ENCODE measurements at regions of chr3 and their contacts with region 1.

Region 1: DNA sequence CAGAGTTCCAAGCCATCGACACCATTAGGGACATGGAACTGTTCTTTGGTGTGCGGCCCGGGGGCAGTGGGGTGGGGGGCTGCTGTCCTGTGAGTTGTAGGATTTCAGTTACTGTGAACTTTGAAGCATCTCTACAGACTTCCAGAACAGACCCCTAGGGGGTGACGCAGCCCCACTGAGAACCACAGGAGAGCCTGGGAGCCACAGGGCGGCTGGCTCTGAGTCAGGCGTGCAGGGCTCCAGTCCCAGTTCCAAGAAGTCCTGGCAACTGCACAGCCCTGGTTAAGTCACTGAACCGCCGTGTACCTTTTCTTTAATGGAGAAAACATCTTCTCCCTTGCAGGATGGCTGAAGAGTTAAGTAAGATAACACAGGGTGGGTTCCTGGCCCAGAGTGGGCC is 23.5 kb upstream of the LRTM1 start:
- DNase-seq: peak; percentile 93
- ATAC-seq: peak; percentile 89
- H3K4me3 ChIP-seq: no peak overlapping the region
- H3K27ac ChIP-seq: peak overlapping the region; percentile 29
- H3K4me1 ChIP-seq: peaks cover 18% of the 10 kb centered on the region
- H3K27me3 ChIP-seq: no peaks in the 10 kb centered on the region
- CTCF ChIP-seq: peak; percentile 92
- POLR2A ChIP-seq: peak; percentile 53; the same call in 1 of the 2 replicates
- RAD21 ChIP-seq: peak; percentile 99

Region 2: DNA sequence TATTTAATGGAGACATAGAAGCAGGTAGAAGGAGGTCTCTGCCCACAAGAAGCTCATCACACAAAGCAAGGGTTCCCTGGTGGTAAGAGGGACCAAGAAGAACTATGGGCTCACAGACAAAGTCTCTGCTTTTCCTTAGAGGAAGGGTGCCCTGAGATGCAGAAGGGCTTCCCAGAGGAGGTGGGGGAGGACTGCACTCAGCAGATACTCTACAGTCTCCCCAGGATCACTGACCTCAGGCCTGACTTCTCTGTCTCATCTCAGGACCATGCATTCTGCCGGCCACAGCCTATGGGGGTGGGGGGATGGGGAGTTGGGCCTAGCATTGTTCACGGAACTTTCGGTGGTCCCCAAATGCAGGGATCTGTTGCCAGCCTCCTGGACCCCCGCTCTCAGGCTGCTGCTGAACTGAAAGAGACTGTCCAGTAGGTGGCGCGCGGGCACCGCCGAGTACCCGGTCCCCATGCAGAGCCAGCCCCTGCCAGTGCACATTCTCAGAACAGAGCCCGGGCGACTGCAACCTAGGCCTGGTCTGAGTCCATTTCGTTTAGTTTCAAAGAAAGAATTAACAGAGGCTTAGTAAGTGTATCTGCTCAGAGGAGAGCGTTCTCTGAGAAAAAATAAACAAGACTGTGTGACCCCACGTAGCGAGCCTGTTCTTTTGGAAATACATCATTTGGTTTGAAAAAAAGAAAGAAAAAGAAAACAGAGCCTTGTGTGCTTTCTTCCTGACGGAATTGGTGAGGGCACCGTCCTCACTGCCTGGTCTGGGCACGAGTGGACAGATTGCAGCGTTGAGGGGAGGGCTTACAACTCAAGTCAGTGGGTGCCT is 97.6 kb before region 1 on chr3:
- CTCF ChIA-PET with region 1: no interaction called
- POLR2A ChIA-PET with region 1: no interaction called
- dilution Hi-C with region 1: no loop called
- in situ Hi-C with region 1: no loop called
- intact Hi-C with region 1: loop called (anchors 5 kb)
- DNase-seq: peak; percentile 74
- ATAC-seq: peak; percentile 98
- H3K4me3 ChIP-seq: no peak overlapping the region
- H3K27ac ChIP-seq: peak overlapping the region; percentile 79
- H3K4me1 ChIP-seq: peaks cover 8% of the 10 kb centered on the region
- H3K27me3 ChIP-seq: peaks cover 5% of the 10 kb centered on the region; the same call in 1 of the 2 replicates
- CTCF ChIP-seq: peak; percentile 83
- POLR2A ChIP-seq: no peak
- RAD21 ChIP-seq: peak; percentile 93

Region 3: DNA sequence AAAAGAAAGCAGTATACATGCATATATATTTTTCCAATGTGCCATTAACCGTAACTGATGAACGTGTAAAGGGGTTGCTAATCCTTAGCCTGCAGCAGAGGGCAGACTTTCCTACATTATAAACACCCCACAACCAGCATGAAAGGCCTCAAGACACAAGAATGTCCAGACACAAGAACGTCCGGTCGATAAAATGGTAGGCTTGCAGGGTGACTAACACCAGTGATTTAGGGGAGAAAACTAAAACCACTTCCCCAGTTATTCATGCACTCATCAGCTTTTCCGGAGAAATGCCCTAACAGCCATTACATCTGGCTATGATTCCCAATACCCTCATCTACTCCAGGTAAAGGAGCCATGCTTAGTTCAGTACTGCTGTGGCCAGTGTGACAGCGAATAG is 81.0 kb before region 1 on chr3:
- CTCF ChIA-PET with region 1: interaction called, 4 read pairs
- POLR2A ChIA-PET with region 1: interaction called, 4 read pairs
- dilution Hi-C with region 1: no loop called
- in situ Hi-C with region 1: no loop called
- intact Hi-C with region 1: loop called (anchors 1 kb)
- DNase-seq: peak; percentile 97
- ATAC-seq: peak; percentile 98
- H3K4me3 ChIP-seq: no peak overlapping the region
- H3K27ac ChIP-seq: peak overlapping the region; percentile 70
- H3K4me1 ChIP-seq: peaks cover 3% of the 10 kb centered on the region
- H3K27me3 ChIP-seq: no peaks in the 10 kb centered on the region
- CTCF ChIP-seq: peak; percentile 88
- POLR2A ChIP-seq: peak; percentile 40; the same call in 1 of the 2 replicates
- RAD21 ChIP-seq: peak; percentile 92

Region 4: DNA sequence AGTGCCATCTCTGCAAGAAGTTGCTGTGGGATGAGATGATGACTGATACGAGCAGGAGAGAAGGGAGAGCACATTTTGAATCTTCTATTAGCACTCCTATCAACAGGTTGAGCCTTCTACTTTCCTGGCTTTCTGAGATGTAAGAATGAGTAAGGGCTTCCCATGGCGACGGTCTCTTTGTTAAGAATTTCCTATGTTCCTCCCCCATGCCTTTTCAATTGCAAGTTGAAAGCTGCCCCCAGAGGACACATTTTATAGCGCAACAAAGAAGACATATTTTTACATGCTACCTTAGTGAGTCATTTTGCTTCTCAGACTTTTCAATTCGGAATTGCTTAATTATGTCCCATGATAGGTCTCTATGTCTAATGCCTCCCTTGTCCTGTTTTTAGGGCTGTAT is 47.8 kb after region 1 on chr3:
- CTCF ChIA-PET with region 1: interaction called, 5 read pairs
- POLR2A ChIA-PET with region 1: no interaction called
- dilution Hi-C with region 1: no loop called
- in situ Hi-C with region 1: no loop called
- intact Hi-C with region 1: loop called (anchors 2 kb)
- DNase-seq: peak; percentile 86
- ATAC-seq: peak; percentile 47
- H3K4me3 ChIP-seq: no peak overlapping the region
- H3K27ac ChIP-seq: no peak overlapping the region
- H3K4me1 ChIP-seq: peaks cover 6% of the 10 kb centered on the region
- H3K27me3 ChIP-seq: no peaks in the 10 kb centered on the region
- CTCF ChIP-seq: peak; percentile 54
- POLR2A ChIP-seq: no peak
- RAD21 ChIP-seq: peak; percentile 49

Region 5: GRCh38 chr3:55180936-55181535 is 229.6 kb after region 1 on chr3:
- CTCF ChIA-PET with region 1: no interaction called
- POLR2A ChIA-PET with region 1: no interaction called
- dilution Hi-C with region 1: no loop called
- in situ Hi-C with region 1: no loop called
- intact Hi-C with region 1: loop called (anchors 5 kb)
- DNase-seq: no peak
- ATAC-seq: no peak
- H3K4me3 ChIP-seq: no peak overlapping the region
- H3K27ac ChIP-seq: no peak overlapping the region
- H3K4me1 ChIP-seq: peaks cover 8% of the 10 kb centered on the region
- H3K27me3 ChIP-seq: no peaks in the 10 kb centered on the region
- CTCF ChIP-seq: peak; percentile 46
- POLR2A ChIP-seq: no peak
- RAD21 ChIP-seq: peak; percentile 24; the same call in 1 of the 2 replicates

Region 6: DNA sequence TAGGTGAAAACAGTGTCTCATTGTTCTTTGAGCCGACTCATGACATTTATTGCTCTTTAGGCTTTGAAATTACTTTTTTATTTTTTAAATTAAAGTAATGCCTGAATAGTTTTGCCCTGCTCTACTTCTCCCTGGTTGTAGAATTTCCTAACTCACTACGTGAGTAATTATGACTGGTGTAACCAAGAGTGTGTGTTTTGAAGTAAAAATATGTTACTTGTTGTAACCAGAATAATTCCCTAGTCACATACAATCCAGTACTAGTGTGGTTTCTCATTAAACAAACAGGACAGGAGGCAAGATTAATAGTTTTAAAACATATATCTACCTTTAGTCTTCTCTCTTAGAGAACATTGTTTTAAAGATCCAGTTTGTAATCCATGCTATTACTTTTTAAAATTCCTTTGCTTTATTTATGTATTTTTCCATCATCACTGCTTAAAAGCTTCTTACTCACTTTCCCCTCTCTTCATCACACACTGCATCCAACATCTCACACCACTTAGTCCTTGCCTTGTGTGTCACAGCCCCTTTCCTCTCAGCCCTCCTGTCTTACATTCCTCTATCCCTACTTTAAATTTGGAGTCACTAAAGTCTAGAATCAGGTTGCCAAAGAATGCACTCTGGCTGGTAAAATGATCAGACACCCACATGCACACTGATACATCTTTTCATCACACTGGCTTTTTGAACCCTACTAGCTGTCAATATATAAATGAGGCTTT is 316.0 kb after region 1 on chr3:
- CTCF ChIA-PET with region 1: no interaction called
- POLR2A ChIA-PET with region 1: no interaction called
- dilution Hi-C with region 1: no loop called
- in situ Hi-C with region 1: no loop called
- intact Hi-C with region 1: loop called (anchors 5 kb)
- DNase-seq: peak; percentile 76
- ATAC-seq: peak; percentile 60
- H3K4me3 ChIP-seq: no peak overlapping the region
- H3K27ac ChIP-seq: peak overlapping the region; percentile 100
- H3K4me1 ChIP-seq: peaks cover 24% of the 10 kb centered on the region
- H3K27me3 ChIP-seq: no peaks in the 10 kb centered on the region
- CTCF ChIP-seq: no peak
- POLR2A ChIP-seq: no peak
- RAD21 ChIP-seq: no peak

Region 7: DNA sequence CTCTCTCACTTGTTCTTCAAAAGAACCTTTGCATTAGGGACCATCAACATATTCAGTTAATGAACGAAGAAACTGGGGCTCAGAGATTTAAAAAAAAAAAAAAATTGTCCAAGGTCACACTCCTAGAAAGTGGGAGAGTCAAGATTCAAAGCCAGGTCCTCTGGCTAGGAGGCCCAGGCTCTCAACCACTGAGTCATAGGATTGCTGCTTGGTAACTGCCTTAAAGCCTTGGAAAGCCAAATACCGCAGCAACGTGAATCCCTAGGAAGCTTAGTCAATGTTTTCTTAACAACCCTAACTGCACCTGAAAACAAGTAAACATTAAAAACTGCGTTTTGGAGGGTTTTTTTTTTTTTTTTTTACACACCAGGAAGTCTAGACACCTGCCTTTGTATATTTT is 378.9 kb after region 1 on chr3:
- CTCF ChIA-PET with region 1: no interaction called
- POLR2A ChIA-PET with region 1: no interaction called
- dilution Hi-C with region 1: no loop called
- in situ Hi-C with region 1: no loop called
- intact Hi-C with region 1: loop called (anchors 5 kb)
- DNase-seq: peak; percentile 99
- ATAC-seq: peak; percentile 79
- H3K4me3 ChIP-seq: no peak overlapping the region
- H3K27ac ChIP-seq: peak overlapping the region; percentile 19; the same call in 1 of the 2 replicates
- H3K4me1 ChIP-seq: peaks cover 29% of the 10 kb centered on the region
- H3K27me3 ChIP-seq: no peaks in the 10 kb centered on the region
- CTCF ChIP-seq: no peak
- POLR2A ChIP-seq: peak; percentile 51; the same call in 1 of the 2 replicates
- RAD21 ChIP-seq: peak; percentile 30